Pancreas (tissue), 10 donors: ENCODE measurements at regions of chr4 and their contacts with region 1.

Region 1: DNA sequence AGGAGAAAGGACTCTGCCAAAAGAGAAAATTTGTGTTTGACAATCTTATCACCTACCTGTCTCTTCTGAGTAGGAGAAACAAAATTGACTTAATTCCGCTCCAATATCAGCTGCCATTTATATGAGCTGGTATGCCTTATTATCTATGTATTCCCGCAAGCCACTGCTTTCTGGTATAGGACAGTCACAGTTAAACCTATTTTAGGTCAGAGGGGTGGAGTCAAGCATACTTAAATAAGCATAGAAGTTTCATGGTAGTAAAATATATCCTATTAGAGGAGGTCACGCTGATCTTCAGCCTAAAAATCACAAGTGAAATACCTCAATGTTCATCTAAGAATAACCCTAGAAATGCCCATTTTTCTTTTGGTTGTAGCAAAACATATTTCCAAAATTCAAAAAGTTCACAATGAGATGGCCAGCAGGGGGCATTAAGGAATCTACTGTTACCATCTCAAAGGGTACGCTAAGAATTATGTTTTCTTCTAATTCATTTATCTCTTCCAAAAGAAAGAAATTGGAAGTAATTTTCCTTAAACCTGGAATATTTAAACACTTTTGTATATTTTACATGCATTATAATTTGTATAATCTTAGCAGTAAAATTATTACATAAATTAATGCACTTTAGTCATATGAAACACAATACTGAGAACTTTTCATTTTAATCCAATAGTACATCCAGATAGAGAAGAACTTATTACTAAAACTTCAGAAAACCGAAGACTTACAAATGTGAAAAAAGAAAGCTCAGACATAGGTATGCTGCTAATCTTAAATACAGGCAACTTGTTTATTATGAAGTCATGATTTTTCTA is 10.5 kb downstream of the PPAT start:
- DNase-seq: no peak
- ATAC-seq: peak in 3 of 4 donors; percentile 62 to 76 (median 70)
- H3K4me3 ChIP-seq: no peak overlapping the region
- H3K27ac ChIP-seq: no peak overlapping the region
- H3K4me1 ChIP-seq: peaks cover 0 to 5% (median 3%) of the 10 kb centered on the region in 3 donors
- H3K27me3 ChIP-seq: no peaks in the 10 kb centered on the region
- CTCF ChIP-seq: peak; percentile 25 to 61 (median 54)

Region 2: GRCh38 chr4:56112377-56112776 is 312.5 kb before region 1 on chr4:
- intact Hi-C with region 1: no loop called
- DNase-seq: no peak
- ATAC-seq: no peak
- H3K4me3 ChIP-seq: no peak overlapping the region
- H3K27ac ChIP-seq: no peak overlapping the region
- H3K4me1 ChIP-seq: no peaks in the 10 kb centered on the region
- H3K27me3 ChIP-seq: no peaks in the 10 kb centered on the region
- CTCF ChIP-seq: no peak

Region 3: DNA sequence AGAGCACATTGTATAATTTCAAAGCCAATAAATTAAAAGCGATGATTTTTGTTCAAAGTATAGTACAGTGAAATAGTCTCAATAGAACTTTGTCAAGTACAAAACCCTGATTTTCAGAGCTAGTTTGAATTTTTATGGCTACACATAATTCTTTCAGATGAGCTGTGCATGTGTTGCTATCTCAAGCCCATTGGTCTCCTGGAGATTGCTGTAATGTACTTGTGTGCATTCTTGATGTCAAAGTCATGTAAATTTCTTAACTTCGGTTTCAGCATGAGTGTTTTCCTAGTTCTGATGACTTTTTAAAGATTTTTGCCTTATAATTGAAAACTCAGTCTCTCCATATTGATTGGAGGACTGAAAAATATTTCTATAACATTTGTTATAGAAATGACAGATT is 275.3 kb before region 1 on chr4:
- intact Hi-C with region 1: no loop called
- DNase-seq: no peak
- ATAC-seq: no peak
- H3K4me3 ChIP-seq: no peak overlapping the region
- H3K27ac ChIP-seq: no peak overlapping the region
- H3K4me1 ChIP-seq: no peaks in the 10 kb centered on the region
- H3K27me3 ChIP-seq: no peaks in the 10 kb centered on the region
- CTCF ChIP-seq: no peak

Region 4: GRCh38 chr4:56530269-56531148 is 105.6 kb after region 1 on chr4:
- intact Hi-C with region 1: no loop called
- DNase-seq: peak; percentile 64 to 89 (median 77)
- ATAC-seq: peak; percentile 95 to 99 (median 98)
- H3K4me3 ChIP-seq: peak overlapping the region; percentile 21 to 57 (median 40)
- H3K27ac ChIP-seq: no peak overlapping the region
- H3K4me1 ChIP-seq: peaks cover 0 to 4% (median 0%) of the 10 kb centered on the region in 3 donors
- H3K27me3 ChIP-seq: peaks cover 0 to 8% (median 0%) of the 10 kb centered on the region in 4 donors
- CTCF ChIP-seq: no peak

Region 5: GRCh38 chr4:56544573-56545131 is 119.7 kb after region 1 on chr4:
- intact Hi-C with region 1: loop called in 1 of 3 experiments (anchors 10 kb)
- DNase-seq: peak; percentile 86 to 99 (median 94)
- ATAC-seq: peak; percentile 99 to 100 (median 100)
- H3K4me3 ChIP-seq: peak overlapping the region in 2 of 4 donors; percentile 33 to 37
- H3K27ac ChIP-seq: no peak overlapping the region
- H3K4me1 ChIP-seq: no peaks in the 10 kb centered on the region
- H3K27me3 ChIP-seq: peaks cover 0 to 4% (median 0%) of the 10 kb centered on the region in 4 donors
- CTCF ChIP-seq: peak; percentile 96 to 99 (median 98)